ENCODE measurements at regions of chr19 and their contacts with region 1.

Region 1: GRCh38 chr19:40348125-40348913 is at the starts of genes C19orf47 and PLD3:
- DNase-seq: peak; percentile 96 to 100 (median 98)
- ATAC-seq: peak; percentile 89
- H3K4me3 ChIP-seq: peak within 1 kb of the TSS; percentile 61 to 89
- H3K4me3 Mint-ChIP-seq: peak within 1 kb of the TSS; percentile 88
- H3K27ac ChIP-seq: peak within 1 kb of the TSS; percentile 73
- H3K27ac Mint-ChIP-seq: peak within 1 kb of the TSS; percentile 90
- H3K4me1 ChIP-seq: peaks cover 13% of the 10 kb centered on the region
- H3K4me1 Mint-ChIP-seq: peaks cover 37% of the 10 kb centered on the region
- H3K27me3 ChIP-seq: no peaks in the 10 kb centered on the region
- H3K27me3 Mint-ChIP-seq: no peaks in the 10 kb centered on the region
- CTCF ChIP-seq: no peak
- total RNA-seq, gene C19orf47: 10.2 to 11.2 TPM
- total RNA-seq, gene PLD3: 48.9 to 56.1 TPM

Region 2: DNA sequence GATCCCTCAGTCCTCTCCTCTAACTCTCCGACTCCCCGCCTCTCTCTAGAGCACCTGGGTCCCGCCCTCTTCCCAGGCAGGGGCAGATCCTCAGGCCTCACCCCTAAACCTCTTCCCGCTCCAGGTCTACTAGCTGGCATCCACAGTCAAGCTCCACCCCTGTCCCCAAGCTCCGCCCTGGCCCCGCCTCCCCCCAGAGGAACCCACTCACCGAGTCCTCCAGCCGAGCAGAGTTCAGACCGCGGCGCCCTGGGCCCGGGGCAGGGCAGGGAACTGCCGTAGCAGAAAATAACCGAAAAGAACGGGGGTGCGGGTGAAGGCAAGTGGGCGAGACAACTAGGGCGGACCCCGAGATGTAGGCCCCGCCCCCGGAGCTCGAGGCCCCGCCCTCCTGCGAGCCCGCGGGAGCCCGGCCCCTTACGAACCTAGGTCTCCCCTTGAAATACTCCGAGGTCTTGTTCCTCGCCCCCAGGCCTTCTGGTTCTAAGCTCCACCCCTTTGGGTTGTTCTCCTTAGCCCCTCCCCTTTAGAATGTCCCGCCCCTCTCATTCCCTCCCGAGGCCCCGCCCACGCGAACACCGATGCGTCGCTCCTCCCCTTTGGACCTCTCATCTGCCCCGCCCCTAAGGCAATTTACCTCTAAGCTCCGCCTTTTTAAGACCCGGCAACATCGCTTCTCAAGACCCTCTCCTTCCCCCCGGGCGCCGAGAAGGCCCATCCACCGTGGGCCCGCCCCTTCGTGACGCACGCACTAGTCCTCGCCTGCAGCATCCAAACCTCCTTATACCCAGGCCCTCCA is 1960.6 kb before region 1 on chr19 and contains the start of gene GGN:
- CTCF ChIA-PET with region 1: no interaction called
- POLR2A ChIA-PET with region 1: no interaction called
- intact Hi-C with region 1: loop called in 1 of 2 experiments (anchors 10 kb)
- DNase-seq: peak; percentile 54 to 87 (median 76)
- ATAC-seq: peak; percentile 70
- H3K4me3 ChIP-seq: peak within 1 kb of the TSS; percentile 55 to 68
- H3K4me3 Mint-ChIP-seq: peak within 1 kb of the TSS; percentile 87
- H3K27ac ChIP-seq: no peak within 1 kb of the TSS
- H3K27ac Mint-ChIP-seq: peak within 1 kb of the TSS; percentile 82
- H3K4me1 ChIP-seq: peaks cover 36% of the 10 kb centered on the region
- H3K4me1 Mint-ChIP-seq: peaks cover 19% of the 10 kb centered on the region
- H3K27me3 ChIP-seq: peaks cover 4 to 13% of the 10 kb centered on the region in 2 experiments
- H3K27me3 Mint-ChIP-seq: peaks cover 29% of the 10 kb centered on the region
- CTCF ChIP-seq: no peak
- total RNA-seq, gene GGN: 0.67 TPM in 1 of 2 experiments, not detected in the other

Region 3: DNA sequence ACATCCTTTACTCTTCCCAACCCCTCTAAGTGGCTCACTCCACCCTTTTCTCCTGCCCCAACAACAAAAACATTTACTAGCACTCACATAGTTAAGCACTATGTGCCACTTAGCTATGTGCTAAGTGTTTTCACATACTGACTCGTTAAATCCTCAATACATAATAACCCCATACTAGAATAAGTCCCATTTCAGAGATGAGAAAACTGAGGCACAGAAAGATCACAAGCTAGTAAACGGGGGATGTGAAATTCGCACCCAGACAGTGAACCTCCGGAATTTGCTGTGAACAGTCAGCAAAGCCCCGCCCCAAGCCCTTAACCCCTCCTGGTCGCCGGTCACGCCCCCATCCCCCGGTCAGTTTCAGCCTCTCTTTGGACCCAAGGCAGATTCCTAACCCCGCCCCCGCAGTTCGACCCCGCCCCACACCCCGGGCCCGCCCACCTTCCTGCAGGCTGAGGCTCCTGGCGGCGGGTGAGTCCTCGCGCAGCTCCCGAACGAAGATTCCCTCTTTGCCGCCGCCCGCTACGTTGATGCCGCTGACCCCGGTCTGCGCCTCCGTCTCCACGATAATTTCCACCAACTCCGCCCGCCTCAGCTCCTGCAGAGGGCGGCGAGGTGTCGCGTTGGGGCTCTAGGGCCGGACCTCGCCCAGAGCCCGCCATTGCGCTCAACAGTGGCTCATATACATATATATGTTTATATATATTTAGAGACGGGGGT is 55.1 kb after region 1 on chr19:
- CTCF ChIA-PET with region 1: no interaction called
- POLR2A ChIA-PET with region 1: interaction called, 5 read pairs
- intact Hi-C with region 1: loop called (anchors 1 kb)
- DNase-seq: peak; percentile 56 to 83 (median 77)
- ATAC-seq: peak; percentile 55
- H3K4me3 ChIP-seq: peak overlapping the region; percentile 70 to 89
- H3K4me3 Mint-ChIP-seq: peak overlapping the region; percentile 95
- H3K27ac ChIP-seq: peak overlapping the region; percentile 56 to 63
- H3K27ac Mint-ChIP-seq: peak overlapping the region; percentile 84
- H3K4me1 ChIP-seq: peaks cover 13% of the 10 kb centered on the region
- H3K4me1 Mint-ChIP-seq: peaks cover 29% of the 10 kb centered on the region
- H3K27me3 ChIP-seq: no peaks in the 10 kb centered on the region
- H3K27me3 Mint-ChIP-seq: no peaks in the 10 kb centered on the region
- CTCF ChIP-seq: no peak

Region 4: GRCh38 chr19:40576585-40577451 is 228.5 kb after region 1 on chr19 and contains the start of gene SHKBP1:
- CTCF ChIA-PET with region 1: no interaction called
- POLR2A ChIA-PET with region 1: no interaction called
- intact Hi-C with region 1: loop called in 1 of 2 experiments (anchors 2 kb)
- DNase-seq: peak; percentile 84 to 97 (median 93)
- ATAC-seq: peak; percentile 99
- H3K4me3 ChIP-seq: peak within 1 kb of the TSS; percentile 72 to 94
- H3K4me3 Mint-ChIP-seq: peak within 1 kb of the TSS; percentile 90
- H3K27ac ChIP-seq: peak within 1 kb of the TSS; percentile 61 to 75
- H3K27ac Mint-ChIP-seq: peak within 1 kb of the TSS; percentile 80
- H3K4me1 ChIP-seq: peaks cover 20% of the 10 kb centered on the region
- H3K4me1 Mint-ChIP-seq: peaks cover 21% of the 10 kb centered on the region
- H3K27me3 ChIP-seq: no peaks in the 10 kb centered on the region
- H3K27me3 Mint-ChIP-seq: no peaks in the 10 kb centered on the region
- CTCF ChIP-seq: no peak
- total RNA-seq, gene SHKBP1: 93.8 to 95.3 TPM

Region 5: DNA sequence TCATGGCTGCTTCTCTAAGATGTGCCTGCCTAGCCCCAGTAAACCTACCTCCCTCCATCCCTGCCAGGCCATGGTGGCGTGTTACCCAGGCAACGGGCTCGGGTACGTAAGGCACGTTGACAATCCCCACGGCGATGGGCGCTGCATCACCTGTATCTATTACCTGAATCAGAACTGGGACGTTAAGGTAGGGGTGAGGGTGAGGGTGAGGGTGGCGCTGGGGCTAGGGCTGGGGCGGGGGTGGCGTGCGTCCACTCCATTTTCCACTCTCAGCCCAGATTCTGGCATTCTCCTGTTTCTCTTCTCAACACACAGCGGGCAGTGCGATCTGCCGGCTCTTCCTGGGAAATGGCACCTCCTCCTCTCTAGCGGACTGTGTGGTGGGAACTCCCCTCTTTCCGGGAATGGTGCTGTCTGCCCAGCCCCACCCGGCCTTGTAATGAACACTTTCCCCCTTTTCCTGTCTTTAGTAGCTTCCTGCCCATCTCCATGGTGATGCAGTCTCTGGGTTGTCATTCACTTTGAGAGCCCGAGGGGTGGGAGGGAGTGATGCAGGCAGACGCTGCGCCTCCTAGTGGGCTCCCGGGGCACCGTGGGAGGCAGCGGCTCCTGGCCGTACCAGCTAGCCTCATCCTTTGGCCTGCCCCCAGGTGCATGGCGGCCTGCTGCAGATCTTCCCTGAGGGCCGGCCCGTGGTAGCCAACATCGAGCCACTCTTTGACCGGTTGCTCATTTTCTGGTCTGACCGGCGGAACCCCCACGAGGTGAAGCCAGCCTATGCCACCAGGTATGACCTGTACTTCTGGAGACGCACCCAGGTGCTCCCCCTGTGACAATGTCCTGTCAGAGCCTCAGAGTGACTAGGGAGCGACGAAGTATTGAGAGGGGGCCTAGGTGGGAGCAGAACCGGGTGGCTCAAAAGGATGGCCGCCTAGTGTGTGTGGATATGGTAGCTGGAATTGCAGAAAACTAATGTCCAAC is 458.5 kb after region 1 on chr19:
- CTCF ChIA-PET with region 1: no interaction called
- POLR2A ChIA-PET with region 1: no interaction called
- intact Hi-C with region 1: loop called (anchors 2 to 5 kb)
- DNase-seq: peak; percentile 54 to 95 (median 81)
- ATAC-seq: peak; percentile 48
- H3K4me3 ChIP-seq: peak overlapping the region in 1 of 2 experiments; percentile 35
- H3K4me3 Mint-ChIP-seq: peak overlapping the region; percentile 83
- H3K27ac ChIP-seq: peak overlapping the region; percentile 66 to 88
- H3K27ac Mint-ChIP-seq: peak overlapping the region; percentile 99
- H3K4me1 ChIP-seq: peaks cover 86% of the 10 kb centered on the region
- H3K4me1 Mint-ChIP-seq: peaks cover 87% of the 10 kb centered on the region
- H3K27me3 ChIP-seq: no peaks in the 10 kb centered on the region
- H3K27me3 Mint-ChIP-seq: no peaks in the 10 kb centered on the region
- CTCF ChIP-seq: peak; percentile 87

Measured in CD8-positive, alpha-beta T cell (primary cell).